K562 (cell line): ENCODE measurements at regions of chr12 and their contacts with region 1.

Region 1: GRCh38 chr12:1117970-1118563 is 127.0 kb downstream of the ERC1 start:
- DNase-seq: peak; percentile 17 to 75 (median 42)
- ATAC-seq: peak; percentile 58; the same call in 2 of the 3 replicates
- H3K4me3 ChIP-seq: no peak overlapping the region
- H3K27ac ChIP-seq: no peak overlapping the region
- H3K4me1 ChIP-seq: no peaks in the 10 kb centered on the region
- H3K27me3 ChIP-seq: no peaks in the 10 kb centered on the region
- CTCF ChIP-seq: peak; percentile 67 to 80 (median 72)
- EP300 ChIP-seq: no peak
- POLR2A ChIP-seq: no peak
- RAD21 ChIP-seq: peak; percentile 83 to 88

Region 2: DNA sequence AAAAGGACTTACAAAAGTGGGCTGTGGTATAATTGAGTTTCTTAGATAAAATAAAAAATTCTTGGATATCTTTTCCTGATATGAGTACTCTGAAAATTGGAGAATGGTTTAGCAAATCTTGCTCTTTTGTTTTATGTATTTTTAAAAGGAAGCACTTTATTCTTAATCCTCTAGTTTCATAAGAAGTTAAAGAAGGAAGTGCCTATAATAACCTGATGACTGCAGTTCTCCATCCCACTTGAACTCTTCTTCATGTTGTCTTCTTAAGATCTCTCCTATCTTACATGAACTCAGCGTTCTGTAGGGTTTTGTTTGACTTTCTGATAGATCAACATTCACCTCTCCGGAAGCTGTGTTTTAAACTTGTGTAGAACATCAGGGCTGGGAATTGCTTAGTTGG is 143.9 kb after region 1 on chr12:
- CTCF ChIA-PET with region 1: no interaction called
- POLR2A ChIA-PET with region 1: no interaction called
- in situ Hi-C with region 1: no loop called
- intact Hi-C with region 1: loop called (anchors 10 kb)
- DNase-seq: no peak
- ATAC-seq: no peak
- H3K4me3 ChIP-seq: no peak overlapping the region
- H3K27ac ChIP-seq: no peak overlapping the region
- H3K4me1 ChIP-seq: no peaks in the 10 kb centered on the region
- H3K27me3 ChIP-seq: no peaks in the 10 kb centered on the region
- CTCF ChIP-seq: no peak
- EP300 ChIP-seq: no peak
- POLR2A ChIP-seq: no peak
- RAD21 ChIP-seq: no peak

Region 3: GRCh38 chr12:1594261-1595025 is 476.4 kb after region 1 on chr12 and contains the start of gene FBXL14:
- CTCF ChIA-PET with region 1: no interaction called
- POLR2A ChIA-PET with region 1: interaction called, 3 read pairs
- in situ Hi-C with region 1: loop called (anchors 5 kb)
- intact Hi-C with region 1: no loop called
- DNase-seq: peak; percentile 77 to 91 (median 80)
- ATAC-seq: peak; percentile 80
- H3K4me3 ChIP-seq: peak within 1 kb of the TSS; percentile 62
- H3K27ac ChIP-seq: peak within 1 kb of the TSS; percentile 87
- H3K4me1 ChIP-seq: peaks cover 26 to 42% of the 10 kb centered on the region in 2 experiments; a peak in 4 of 5 replicates
- H3K27me3 ChIP-seq: no peaks in the 10 kb centered on the region
- CTCF ChIP-seq: no peak
- EP300 ChIP-seq: no peak
- POLR2A ChIP-seq: no peak
- RAD21 ChIP-seq: no peak
- polyA plus RNA-seq, gene FBXL14: 0.13 to 0.17 TPM

Region 4: GRCh38 chr12:1804545-1805332 is 686.7 kb after region 1 on chr12:
- CTCF ChIA-PET with region 1: no interaction called
- POLR2A ChIA-PET with region 1: no interaction called
- in situ Hi-C with region 1: no loop called
- intact Hi-C with region 1: no loop called
- DNase-seq: peak; percentile 86 to 90 (median 90)
- ATAC-seq: peak; percentile 97
- H3K4me3 ChIP-seq: no peak overlapping the region
- H3K27ac ChIP-seq: no peak overlapping the region
- H3K4me1 ChIP-seq: peaks cover 11 to 21% of the 10 kb centered on the region in 2 experiments
- H3K27me3 ChIP-seq: no peaks in the 10 kb centered on the region
- CTCF ChIP-seq: no peak
- EP300 ChIP-seq: no peak
- POLR2A ChIP-seq: peak; percentile 39; the same call in 1 of the 2 replicates
- RAD21 ChIP-seq: no peak